Colonic mucosa (tissue), 4 donors: ENCODE measurements at regions of chr20 and their contacts with region 1.

Region 1: GRCh38 chr20:14055127-14055742 is 59.9 kb downstream of the MACROD2 start:
- DNase-seq: peak; percentile 52
- H3K4me3 ChIP-seq: no peak overlapping the region
- H3K27ac ChIP-seq: no peak overlapping the region
- H3K4me1 ChIP-seq: no peaks in the 10 kb centered on the region
- H3K27me3 ChIP-seq: no peaks in the 10 kb centered on the region
- CTCF ChIP-seq: peak; percentile 67

Region 2: GRCh38 chr20:13821876-13822275 is 233.4 kb before region 1 on chr20:
- intact Hi-C with region 1: loop called (anchors 2 kb)
- DNase-seq: no peak
- H3K4me3 ChIP-seq: no peak overlapping the region
- H3K27ac ChIP-seq: no peak overlapping the region
- H3K4me1 ChIP-seq: no peaks in the 10 kb centered on the region
- H3K27me3 ChIP-seq: no peaks in the 10 kb centered on the region
- CTCF ChIP-seq: no peak

Region 3: GRCh38 chr20:14193885-14194284 is 138.7 kb after region 1 on chr20:
- intact Hi-C with region 1: no loop called
- DNase-seq: no peak
- H3K4me3 ChIP-seq: no peak overlapping the region
- H3K27ac ChIP-seq: no peak overlapping the region
- H3K4me1 ChIP-seq: no peaks in the 10 kb centered on the region
- H3K27me3 ChIP-seq: no peaks in the 10 kb centered on the region
- CTCF ChIP-seq: no peak